ENCODE measurements at regions of chr1 and their contacts with region 1.

Region 1: GRCh38 chr1:15323351-15323988 is 76.4 kb downstream of the FHAD1 start:
- DNase-seq: peak; percentile 66 to 76 (median 67)
- H3K4me3 ChIP-seq: no peak overlapping the region
- H3K4me3 Mint-ChIP-seq: no peak overlapping the region
- H3K27ac ChIP-seq: no peak overlapping the region
- H3K27ac Mint-ChIP-seq: no peak overlapping the region
- H3K4me1 ChIP-seq: peaks cover 5% of the 10 kb centered on the region
- H3K4me1 Mint-ChIP-seq: peaks cover 0 to 6% (median 0%) of the 10 kb centered on the region in 4 donors
- H3K27me3 ChIP-seq: no peaks in the 10 kb centered on the region
- H3K27me3 Mint-ChIP-seq: peaks cover 4 to 7% of the 10 kb centered on the region in 2 donors

Region 2: GRCh38 chr1:15337656-15338402 is 14.4 kb after region 1 on chr1:
- CTCF ChIA-PET with region 1: interaction called, 22 read pairs
- POLR2A ChIA-PET with region 1: no interaction called
- intact Hi-C with region 1: no loop called
- DNase-seq: no peak
- H3K4me3 ChIP-seq: no peak overlapping the region
- H3K4me3 Mint-ChIP-seq: no peak overlapping the region
- H3K27ac ChIP-seq: no peak overlapping the region
- H3K27ac Mint-ChIP-seq: no peak overlapping the region
- H3K4me1 ChIP-seq: peaks cover 16% of the 10 kb centered on the region
- H3K4me1 Mint-ChIP-seq: peaks cover 10 to 18% (median 15%) of the 10 kb centered on the region in 4 donors
- H3K27me3 ChIP-seq: no peaks in the 10 kb centered on the region
- H3K27me3 Mint-ChIP-seq: peaks cover 0 to 12% of the 10 kb centered on the region in 2 donors

Region 3: DNA sequence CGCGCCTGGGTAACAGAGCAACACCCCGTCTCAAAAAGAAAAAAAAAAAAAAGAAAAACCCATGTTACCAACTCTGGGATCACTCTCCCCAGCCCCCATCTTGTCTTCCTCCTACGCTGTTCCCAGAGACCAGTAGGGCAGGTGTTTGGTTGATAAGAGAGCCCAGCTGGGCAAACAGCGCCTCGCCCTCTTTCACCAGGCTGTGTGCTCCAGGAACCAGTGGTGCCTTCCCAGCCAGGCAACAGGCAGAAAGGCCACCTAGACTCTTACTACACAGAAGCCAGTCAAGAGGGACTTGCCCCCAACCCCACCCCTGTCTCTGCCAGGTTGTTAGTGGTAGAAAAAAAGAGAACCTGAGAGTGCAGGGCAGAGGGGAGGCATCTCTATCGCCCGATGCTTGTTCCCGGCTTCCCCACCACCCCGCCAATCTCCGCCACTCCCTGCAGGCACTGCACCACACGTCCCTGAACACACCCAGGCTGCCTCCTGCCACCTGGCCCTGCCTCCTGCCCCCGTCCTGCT is 100.7 kb after region 1 on chr1:
- CTCF ChIA-PET with region 1: interaction called, 274 read pairs
- POLR2A ChIA-PET with region 1: interaction called, 21 read pairs
- intact Hi-C with region 1: no loop called
- DNase-seq: no peak
- H3K4me3 ChIP-seq: no peak overlapping the region
- H3K4me3 Mint-ChIP-seq: no peak overlapping the region
- H3K27ac ChIP-seq: no peak overlapping the region
- H3K27ac Mint-ChIP-seq: peak overlapping the region in 6 of 7 donors; percentile 24 to 85 (median 77)
- H3K4me1 ChIP-seq: peaks cover 13% of the 10 kb centered on the region
- H3K4me1 Mint-ChIP-seq: peaks cover 5 to 30% (median 13%) of the 10 kb centered on the region in 4 donors
- H3K27me3 ChIP-seq: no peaks in the 10 kb centered on the region
- H3K27me3 Mint-ChIP-seq: no peaks in the 10 kb centered on the region